Thyroid gland (tissue), 4 donors: ENCODE measurements at regions of chr1 and their contacts with region 1.

Region 1: DNA sequence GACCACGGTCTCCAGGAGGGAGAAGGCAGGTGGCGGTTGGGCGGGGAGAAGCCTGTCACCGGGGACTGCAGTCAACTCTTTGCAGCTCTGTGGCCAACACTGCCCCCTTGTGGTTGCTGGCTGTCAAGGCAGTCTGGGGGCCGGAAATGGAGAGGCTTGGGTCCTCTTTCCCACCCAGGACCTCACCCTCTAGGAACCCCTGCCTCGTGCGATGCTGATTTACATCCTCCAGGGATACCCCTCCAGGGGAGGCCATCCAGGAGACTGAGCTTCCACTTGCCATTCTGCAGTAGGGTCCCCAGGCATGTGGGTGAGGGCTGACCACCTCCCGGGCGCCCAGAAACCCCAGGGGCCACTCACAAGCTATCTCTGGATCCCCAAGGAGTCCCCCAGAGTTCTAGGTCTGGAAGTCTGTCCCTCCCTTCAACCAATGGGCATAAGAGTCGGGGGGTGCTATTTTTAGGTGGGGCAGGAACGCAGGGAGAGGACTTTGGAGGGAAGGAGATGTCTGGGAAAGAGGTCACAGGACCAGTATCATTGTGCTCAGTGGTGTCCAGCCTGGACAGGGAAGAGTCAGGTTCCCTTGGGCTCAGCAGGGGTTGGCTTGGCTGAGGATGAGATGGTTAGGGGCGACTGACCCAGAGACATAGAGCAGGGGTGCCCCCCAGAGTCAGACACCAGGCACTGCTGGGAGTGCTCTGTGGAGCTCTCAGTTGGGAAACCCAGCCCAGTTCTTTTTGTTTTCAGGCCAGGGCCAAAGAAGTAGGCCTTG is 7.1 kb upstream of the GPR61 start:
- DNase-seq: peak; percentile 76 to 83
- H3K4me3 ChIP-seq: no peak overlapping the region
- H3K27ac ChIP-seq: no peak overlapping the region
- H3K4me1 ChIP-seq: peaks cover 4 to 6% of the 10 kb centered on the region in 2 donors
- H3K27me3 ChIP-seq: no peaks in the 10 kb centered on the region
- CTCF ChIP-seq: peak; percentile 90 to 98 (median 96)
- POLR2A ChIP-seq: no peak

Region 2: DNA sequence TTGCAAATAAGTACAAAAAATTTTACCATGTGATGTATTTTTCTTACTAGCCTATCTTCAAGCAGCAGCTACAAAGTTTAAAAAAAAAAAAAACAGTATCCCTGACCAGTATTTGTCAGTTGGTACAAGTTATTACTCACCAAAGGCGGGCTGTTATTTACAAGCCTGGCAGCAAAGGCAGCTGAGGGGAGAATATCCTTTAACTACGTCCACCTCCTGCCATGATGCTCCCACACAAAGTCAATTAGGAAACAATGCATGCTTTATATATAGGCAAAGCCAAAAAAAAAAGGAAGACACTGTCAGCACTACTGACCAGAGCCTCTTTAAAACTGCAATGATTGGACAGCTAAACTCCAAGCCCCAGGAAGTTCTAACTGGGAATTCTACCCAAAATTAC is 120.0 kb before region 1 on chr1:
- intact Hi-C with region 1: no loop called
- DNase-seq: no peak
- H3K4me3 ChIP-seq: no peak overlapping the region
- H3K27ac ChIP-seq: no peak overlapping the region
- H3K4me1 ChIP-seq: no peaks in the 10 kb centered on the region
- H3K27me3 ChIP-seq: no peaks in the 10 kb centered on the region
- CTCF ChIP-seq: no peak
- POLR2A ChIP-seq: no peak

Region 3: DNA sequence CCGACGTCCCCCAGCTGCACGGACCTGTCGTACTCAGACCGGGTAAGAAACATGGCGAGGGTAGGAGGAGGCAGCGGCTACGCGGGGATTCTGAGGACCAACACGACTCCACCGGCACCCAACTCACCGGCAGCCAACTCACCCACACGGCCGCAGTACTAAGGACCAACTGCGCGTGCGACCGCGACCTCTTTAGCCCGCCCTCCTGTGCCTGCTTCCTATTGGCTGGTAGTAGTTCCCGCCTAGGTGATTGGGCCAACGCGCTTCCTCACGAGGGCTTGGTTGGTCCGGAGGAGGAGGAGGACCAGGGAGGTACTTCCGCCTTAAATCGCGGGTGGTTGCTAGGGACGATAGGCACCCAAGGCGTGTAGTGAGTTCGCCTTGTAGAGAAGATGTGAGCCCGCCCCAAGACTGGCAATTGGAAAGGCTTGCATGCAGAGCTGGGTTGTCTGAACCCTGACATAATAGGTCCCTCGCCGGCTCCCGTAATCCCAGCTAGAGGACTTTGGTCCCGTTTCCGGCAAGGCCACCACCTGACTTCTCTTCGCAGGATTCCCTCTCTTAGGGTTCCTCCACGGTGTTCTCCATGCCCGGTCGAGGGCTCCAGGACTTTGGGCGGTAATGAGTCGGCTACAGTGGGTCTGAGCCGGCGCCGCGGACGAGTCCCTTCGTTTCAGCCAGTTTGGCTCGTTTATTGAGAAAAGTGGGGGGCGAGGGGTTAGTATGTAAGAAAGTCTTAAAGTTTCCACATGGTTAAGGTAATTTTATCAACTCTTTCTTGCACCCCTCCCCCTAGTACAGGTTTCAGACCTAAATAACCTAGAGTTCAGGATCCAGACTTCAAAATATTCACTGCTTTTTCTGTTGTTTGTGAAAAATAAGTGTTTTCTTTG is 106.0 kb before region 1 on chr1 and contains the start of gene PSMA5:
- intact Hi-C with region 1: loop called (anchors 5 kb)
- DNase-seq: peak; percentile 98 to 99
- H3K4me3 ChIP-seq: peak within 1 kb of the TSS; percentile 45 to 86 (median 70)
- H3K27ac ChIP-seq: peak within 1 kb of the TSS; percentile 67 to 81 (median 77)
- H3K4me1 ChIP-seq: peaks cover 18 to 23% of the 10 kb centered on the region in 2 donors
- H3K27me3 ChIP-seq: no peaks in the 10 kb centered on the region
- CTCF ChIP-seq: peak in 1 of 6 experiments; percentile 10
- POLR2A ChIP-seq: peak in 1 of 2 donors; percentile 79
- total RNA-seq, gene PSMA5: 25.1 to 35.7 (median 28.0) TPM

Region 4: GRCh38 chr1:109493805-109494539 is 38.6 kb before region 1 on chr1 and contains the start of gene CYB561D1:
- intact Hi-C with region 1: loop called (anchors 2 kb)
- DNase-seq: peak; percentile 86 to 88
- H3K4me3 ChIP-seq: peak within 1 kb of the TSS; percentile 43 to 79 (median 69)
- H3K27ac ChIP-seq: peak within 1 kb of the TSS in 2 of 3 donors; percentile 43 to 55
- H3K4me1 ChIP-seq: peaks cover 10 to 15% of the 10 kb centered on the region in 2 donors
- H3K27me3 ChIP-seq: no peaks in the 10 kb centered on the region
- CTCF ChIP-seq: peak; percentile 67 to 95 (median 93)
- POLR2A ChIP-seq: peak in 1 of 2 donors; percentile 68
- total RNA-seq, gene CYB561D1: 8.1 to 16.0 (median 12.2) TPM